ENCODE measurements at regions of chr5 and their contacts with region 1.

Region 1: DNA sequence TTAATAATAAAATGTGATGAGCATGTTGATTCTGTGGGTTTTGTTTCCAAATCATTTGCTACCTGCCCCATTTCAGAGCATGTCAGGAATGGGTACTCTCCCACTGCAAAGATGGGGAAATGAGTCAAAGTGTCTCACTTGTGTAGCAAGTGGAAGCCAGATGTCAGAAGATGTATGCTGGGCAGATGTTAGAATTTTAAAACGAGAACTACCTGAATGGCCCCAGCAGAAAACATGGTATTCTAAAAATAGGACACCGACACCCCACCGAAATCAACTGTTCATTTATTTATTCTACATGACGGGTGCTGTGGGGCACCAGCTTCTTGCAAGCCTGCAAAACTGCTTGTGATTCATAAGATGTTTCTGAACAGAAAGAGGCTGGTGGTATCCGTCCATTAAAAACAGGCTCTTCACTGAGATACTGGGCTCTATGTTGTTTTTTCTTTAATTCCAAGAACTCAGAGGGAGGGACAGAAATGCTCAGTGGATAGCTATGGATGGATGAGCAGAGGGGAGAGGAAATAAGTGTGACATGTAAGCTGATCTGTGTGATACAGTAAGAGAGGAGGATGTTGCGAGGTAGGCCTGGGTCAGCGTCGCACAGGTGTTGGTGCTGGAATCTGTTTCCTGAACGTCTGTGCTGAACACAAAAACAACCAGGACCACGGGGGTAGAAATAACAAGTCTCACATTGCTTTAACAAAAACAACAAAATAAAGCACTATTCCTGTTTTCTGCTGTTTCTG is 157.2 kb downstream of the EFNA5 start:
- DNase-seq: peak; percentile 95
- H3K4me3 ChIP-seq: peak overlapping the region; percentile 56
- H3K27ac ChIP-seq: peak overlapping the region; percentile 99
- H3K4me1 ChIP-seq: peaks cover 91% of the 10 kb centered on the region
- CTCF ChIP-seq: no peak; the same call in 1 of the 2 replicates

Region 2: DNA sequence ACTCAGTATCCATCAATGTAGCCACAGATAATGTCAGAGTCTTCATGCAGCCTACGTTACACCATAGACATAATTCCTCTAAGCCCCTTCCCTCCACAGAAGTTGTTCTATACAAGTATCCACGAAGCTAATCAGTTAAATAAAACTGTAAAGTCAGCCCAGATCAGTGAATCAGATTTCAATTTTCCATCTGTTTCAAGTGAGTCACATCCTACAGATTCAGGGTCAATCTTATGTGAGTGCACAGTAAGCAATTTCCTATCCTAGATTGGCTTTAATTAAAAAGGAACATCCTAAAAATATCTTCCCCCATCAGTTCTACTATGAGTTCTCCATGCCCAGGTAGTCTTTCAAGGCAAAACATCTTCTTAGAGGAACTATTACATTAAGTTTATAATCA is 245.3 kb before region 1 on chr5:
- CTCF ChIA-PET with region 1: no interaction called
- POLR2A ChIA-PET with region 1: no interaction called
- intact Hi-C with region 1: loop called (anchors 5 kb)
- DNase-seq: no peak
- H3K4me3 ChIP-seq: no peak overlapping the region
- H3K27ac ChIP-seq: no peak overlapping the region
- H3K4me1 ChIP-seq: peaks cover 19% of the 10 kb centered on the region
- CTCF ChIP-seq: no peak

Region 3: GRCh38 chr5:107389130-107389774 is 124.3 kb before region 1 on chr5:
- CTCF ChIA-PET with region 1: interaction called, 3 read pairs
- POLR2A ChIA-PET with region 1: interaction called, 50 read pairs
- intact Hi-C with region 1: loop called (anchors 1 kb)
- DNase-seq: peak; percentile 96
- H3K4me3 ChIP-seq: peak overlapping the region; percentile 53
- H3K27ac ChIP-seq: peak overlapping the region; percentile 97
- H3K4me1 ChIP-seq: peaks cover 80% of the 10 kb centered on the region
- CTCF ChIP-seq: peak; percentile 54; the same call in 1 of the 2 replicates

Region 4: DNA sequence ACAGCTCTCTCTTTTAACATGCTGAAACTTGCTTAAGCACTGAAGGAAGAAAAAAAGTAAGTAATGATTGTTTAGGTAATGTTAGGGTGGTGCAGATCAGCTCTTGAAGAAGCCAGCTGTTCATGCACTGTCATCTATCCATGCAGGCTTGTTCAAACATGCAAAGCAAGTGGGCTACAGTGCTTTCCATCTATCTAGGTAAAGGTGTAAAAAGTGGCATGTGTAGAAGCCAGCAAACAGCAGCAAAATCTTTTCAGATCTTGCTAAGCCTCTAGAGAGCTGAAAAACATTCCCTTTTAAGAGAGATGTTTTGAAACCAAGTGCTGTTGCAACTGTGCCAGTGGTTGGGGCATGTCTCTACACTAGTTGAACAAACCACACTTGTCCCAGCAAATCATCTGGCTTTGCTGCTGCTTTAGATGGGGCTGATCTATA is 57.2 kb before region 1 on chr5:
- CTCF ChIA-PET with region 1: no interaction called
- POLR2A ChIA-PET with region 1: interaction called, 12 read pairs
- intact Hi-C with region 1: no loop called
- DNase-seq: no peak
- H3K4me3 ChIP-seq: no peak overlapping the region
- H3K27ac ChIP-seq: no peak overlapping the region
- H3K4me1 ChIP-seq: peaks cover 55% of the 10 kb centered on the region
- CTCF ChIP-seq: no peak

Region 5: GRCh38 chr5:107501965-107502675 is 11.4 kb before region 1 on chr5:
- CTCF ChIA-PET with region 1: interaction called, 5 read pairs
- POLR2A ChIA-PET with region 1: interaction called, 54 read pairs
- intact Hi-C with region 1: no loop called
- DNase-seq: no peak
- H3K4me3 ChIP-seq: no peak overlapping the region
- H3K27ac ChIP-seq: no peak overlapping the region
- H3K4me1 ChIP-seq: peaks cover 21% of the 10 kb centered on the region
- CTCF ChIP-seq: no peak

Region 6: GRCh38 chr5:107630202-107630601 is 116.7 kb after region 1 on chr5:
- CTCF ChIA-PET with region 1: no interaction called
- POLR2A ChIA-PET with region 1: no interaction called
- intact Hi-C with region 1: no loop called
- DNase-seq: no peak
- H3K4me3 ChIP-seq: no peak overlapping the region
- H3K27ac ChIP-seq: no peak overlapping the region
- H3K4me1 ChIP-seq: peaks cover 7% of the 10 kb centered on the region
- CTCF ChIP-seq: no peak

Region 7: GRCh38 chr5:107673368-107674136 is 160.0 kb after region 1 on chr5:
- CTCF ChIA-PET with region 1: no interaction called
- POLR2A ChIA-PET with region 1: no interaction called
- intact Hi-C with region 1: loop called (anchors 1 kb)
- DNase-seq: peak; percentile 93
- H3K4me3 ChIP-seq: peak overlapping the region; percentile 74
- H3K27ac ChIP-seq: peak overlapping the region; percentile 28
- H3K4me1 ChIP-seq: peaks cover 25% of the 10 kb centered on the region
- CTCF ChIP-seq: peak; percentile 99

Measured in OCI-LY7 (cell line).